ENCODE measurements at regions of chr4 and their contacts with region 1.

Region 1: GRCh38 chr4:174631901-174632758 is 109.8 kb upstream of the HPGD start:
- DNase-seq: no peak
- H3K4me3 ChIP-seq: no peak overlapping the region
- H3K27ac ChIP-seq: no peak overlapping the region
- H3K4me1 ChIP-seq: no peaks in the 10 kb centered on the region
- H3K27me3 ChIP-seq: no peaks in the 10 kb centered on the region
- CTCF ChIP-seq: peak in 2 of 3 experiments; percentile 55 to 58; a peak in 2 of 4 replicates
- EP300 ChIP-seq: no peak
- POLR2A ChIP-seq: no peak
- RAD21 ChIP-seq: peak; percentile 84 to 88

Region 2: DNA sequence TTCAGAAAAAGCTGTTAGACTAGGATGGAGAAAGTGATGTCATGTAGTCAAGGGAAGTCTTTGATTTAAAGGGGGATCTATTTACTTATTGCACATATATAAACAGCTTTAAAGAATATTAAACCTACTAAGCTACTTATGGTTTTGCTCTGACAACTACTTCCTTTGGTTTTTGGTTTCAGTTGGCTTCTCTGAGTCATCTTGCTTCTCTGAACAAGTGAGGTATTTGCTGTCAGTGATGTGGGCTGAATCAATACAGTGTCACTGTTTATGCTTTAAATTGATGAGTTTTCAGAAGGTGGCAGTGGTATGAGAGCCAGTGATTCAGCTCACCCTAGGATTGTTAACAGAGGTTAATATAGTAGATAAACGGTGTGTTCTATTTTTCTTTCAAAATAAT is 273.3 kb before region 1 on chr4:
- CTCF ChIA-PET with region 1: interaction called, 20 read pairs
- POLR2A ChIA-PET with region 1: no interaction called
- DNase-seq: no peak
- H3K4me3 ChIP-seq: no peak overlapping the region
- H3K27ac ChIP-seq: no peak overlapping the region
- H3K4me1 ChIP-seq: no peaks in the 10 kb centered on the region
- H3K27me3 ChIP-seq: no peaks in the 10 kb centered on the region
- CTCF ChIP-seq: no peak
- EP300 ChIP-seq: no peak
- POLR2A ChIP-seq: no peak
- RAD21 ChIP-seq: no peak

Region 3: DNA sequence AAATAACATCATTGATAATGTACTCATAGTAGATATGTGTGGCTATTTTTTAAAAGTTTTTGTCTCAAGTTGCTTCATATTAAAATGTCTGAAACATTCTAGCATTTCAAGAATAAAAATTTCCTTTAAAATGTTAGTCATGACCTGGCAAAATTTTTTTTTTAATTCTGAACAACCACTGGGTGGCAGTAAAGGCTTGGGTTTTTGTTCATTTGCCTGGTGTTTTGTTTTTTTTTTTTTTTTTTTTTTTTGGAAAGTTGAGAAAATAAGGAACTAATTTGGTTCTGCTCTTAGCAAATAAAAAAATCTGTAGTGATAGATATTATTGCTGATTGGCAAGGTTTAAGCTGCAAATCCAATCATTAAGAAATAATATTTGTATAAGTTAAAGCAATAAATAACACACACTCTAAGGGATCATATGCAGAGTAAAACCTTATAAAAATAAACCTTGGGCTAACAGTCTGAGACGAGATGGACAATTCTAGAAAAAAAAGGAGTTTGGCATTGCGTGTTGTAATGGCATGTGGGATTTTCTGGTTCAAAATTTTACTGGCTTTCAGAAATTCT is 267.0 kb before region 1 on chr4:
- CTCF ChIA-PET with region 1: interaction called, 20 read pairs
- POLR2A ChIA-PET with region 1: no interaction called
- DNase-seq: no peak
- H3K4me3 ChIP-seq: no peak overlapping the region
- H3K27ac ChIP-seq: no peak overlapping the region
- H3K4me1 ChIP-seq: no peaks in the 10 kb centered on the region
- H3K27me3 ChIP-seq: no peaks in the 10 kb centered on the region
- CTCF ChIP-seq: peak in 1 of 3 experiments; percentile 42; a peak in 1 of 4 replicates
- EP300 ChIP-seq: no peak
- POLR2A ChIP-seq: no peak
- RAD21 ChIP-seq: peak; percentile 69 to 79

Region 4: GRCh38 chr4:174406383-174406782 is 225.7 kb before region 1 on chr4:
- CTCF ChIA-PET with region 1: no interaction called
- POLR2A ChIA-PET with region 1: no interaction called
- DNase-seq: no peak
- H3K4me3 ChIP-seq: no peak overlapping the region
- H3K27ac ChIP-seq: no peak overlapping the region
- H3K4me1 ChIP-seq: peaks cover 0 to 10% (median 3%) of the 10 kb centered on the region in 4 experiments; a peak in 4 of 7 replicates
- H3K27me3 ChIP-seq: no peaks in the 10 kb centered on the region
- CTCF ChIP-seq: no peak
- EP300 ChIP-seq: no peak
- POLR2A ChIP-seq: no peak
- RAD21 ChIP-seq: no peak

Region 5: DNA sequence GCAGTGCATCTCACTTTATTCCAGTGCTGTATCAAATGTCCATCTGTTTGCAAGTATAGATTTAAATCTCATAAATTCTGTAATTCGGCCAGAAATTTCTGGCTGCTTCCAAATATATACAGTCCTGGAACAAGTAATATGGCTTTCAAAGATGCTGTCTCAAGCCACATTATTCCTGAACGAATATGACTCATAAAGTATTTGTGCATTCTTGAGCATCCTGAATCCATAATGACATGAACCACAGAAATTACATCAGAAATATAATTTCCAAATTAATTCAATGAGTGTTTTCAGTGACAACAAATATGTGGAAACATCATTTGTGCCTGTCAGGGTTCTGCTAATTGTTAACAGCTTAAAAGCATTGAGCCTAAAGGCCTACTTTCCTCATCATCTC is 31.1 kb after region 1 on chr4:
- CTCF ChIA-PET with region 1: no interaction called
- POLR2A ChIA-PET with region 1: no interaction called
- DNase-seq: no peak
- H3K4me3 ChIP-seq: no peak overlapping the region
- H3K27ac ChIP-seq: no peak overlapping the region
- H3K4me1 ChIP-seq: no peaks in the 10 kb centered on the region
- H3K27me3 ChIP-seq: no peaks in the 10 kb centered on the region
- CTCF ChIP-seq: no peak
- EP300 ChIP-seq: no peak
- POLR2A ChIP-seq: no peak
- RAD21 ChIP-seq: no peak